Psoas muscle (tissue), 8 donors: ENCODE measurements at regions of chr3 and their contacts with region 1.

Region 1: GRCh38 chr3:100089812-100090668 is 24.3 kb downstream of the FILIP1L start:
- DNase-seq: peak; percentile 37 to 64
- ATAC-seq: peak; percentile 70 to 93 (median 92)
- H3K4me3 ChIP-seq: peak overlapping the region; percentile 26
- H3K27ac ChIP-seq: peak overlapping the region; percentile 84
- H3K4me1 ChIP-seq: peaks cover 72% of the 10 kb centered on the region
- H3K27me3 ChIP-seq: no peaks in the 10 kb centered on the region
- CTCF ChIP-seq: peak; percentile 38

Region 2: GRCh38 chr3:100073899-100074307 is 16.1 kb before region 1 on chr3:
- intact Hi-C with region 1: loop called in 1 of 2 experiments (anchors 2 kb)
- DNase-seq: no peak
- ATAC-seq: no peak
- H3K4me3 ChIP-seq: no peak overlapping the region
- H3K27ac ChIP-seq: peak overlapping the region; percentile 80
- H3K4me1 ChIP-seq: peaks cover 69% of the 10 kb centered on the region
- H3K27me3 ChIP-seq: no peaks in the 10 kb centered on the region
- CTCF ChIP-seq: no peak

Region 3: DNA sequence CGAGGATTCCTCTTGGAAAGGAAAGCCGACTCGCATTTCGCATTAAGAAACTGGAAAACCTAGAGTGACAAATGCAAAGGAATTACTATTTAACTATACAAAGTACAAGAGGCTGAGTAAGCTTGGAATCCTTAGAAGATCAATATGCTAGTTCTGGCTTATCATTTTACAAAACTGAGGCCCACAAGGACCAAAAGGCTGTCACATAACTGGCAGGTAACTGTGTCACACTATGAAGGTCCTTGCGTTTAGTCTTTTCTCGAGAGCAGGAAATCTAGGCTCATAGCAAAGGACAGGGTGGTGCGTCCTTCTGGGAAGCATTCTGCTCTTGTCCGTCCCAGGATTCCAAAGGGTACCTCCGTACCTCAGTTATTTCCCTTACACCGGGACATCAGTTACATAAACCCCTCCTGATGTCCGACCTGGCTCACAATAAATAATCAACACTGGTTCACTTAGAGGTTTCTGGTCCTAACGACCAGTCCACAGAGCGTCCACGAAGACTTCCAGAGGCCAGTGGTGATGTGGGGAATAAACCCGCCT is 1595.9 kb after region 1 on chr3:
- intact Hi-C with region 1: loop called in 1 of 2 experiments (anchors 10 kb)
- DNase-seq: no peak
- ATAC-seq: peak; percentile 10 to 34 (median 17)
- H3K4me3 ChIP-seq: peak overlapping the region; percentile 78
- H3K27ac ChIP-seq: peak overlapping the region; percentile 92
- H3K4me1 ChIP-seq: peaks cover 33% of the 10 kb centered on the region
- H3K27me3 ChIP-seq: no peaks in the 10 kb centered on the region
- CTCF ChIP-seq: no peak